ENCODE measurements at regions of chr15 and their contacts with region 1.

Region 1: GRCh38 chr15:73633111-73633990 is at the start of gene NPTN:
- DNase-seq: peak; percentile 100
- H3K4me3 Mint-ChIP-seq: peak within 1 kb of the TSS; percentile 86
- H3K27ac Mint-ChIP-seq: peak within 1 kb of the TSS; percentile 82
- H3K4me1 Mint-ChIP-seq: peaks cover 36% of the 10 kb centered on the region
- H3K27me3 Mint-ChIP-seq: peaks cover 20% of the 10 kb centered on the region
- total RNA-seq, gene NPTN: 61.6 and 68.7 TPM in 2 replicates

Region 2: DNA sequence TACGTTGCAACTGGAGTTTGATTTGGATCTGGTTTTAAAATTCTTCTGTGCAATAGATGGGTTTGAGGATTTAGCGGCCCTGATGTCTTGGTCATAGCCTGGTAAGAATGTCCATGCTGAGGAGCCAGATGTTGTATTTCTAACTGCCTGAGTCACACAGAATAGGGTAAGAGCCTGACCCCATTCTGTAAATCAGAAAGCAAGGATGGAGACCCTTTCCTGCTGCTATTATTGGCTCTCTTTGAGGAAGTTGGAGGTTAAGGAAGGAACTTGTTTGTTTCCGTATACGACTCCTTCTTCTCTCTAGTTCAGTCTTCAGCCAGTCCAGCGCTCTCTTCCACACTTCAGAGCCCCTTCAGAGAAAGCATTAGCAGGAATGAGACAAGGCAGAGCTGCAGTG is 329.7 kb before region 1 on chr15:
- intact Hi-C with region 1: loop called (anchors 2 kb)
- DNase-seq: no peak
- H3K4me3 Mint-ChIP-seq: no peak overlapping the region
- H3K27ac Mint-ChIP-seq: no peak overlapping the region
- H3K4me1 Mint-ChIP-seq: peaks cover 7% of the 10 kb centered on the region
- H3K27me3 Mint-ChIP-seq: no peaks in the 10 kb centered on the region

Region 3: DNA sequence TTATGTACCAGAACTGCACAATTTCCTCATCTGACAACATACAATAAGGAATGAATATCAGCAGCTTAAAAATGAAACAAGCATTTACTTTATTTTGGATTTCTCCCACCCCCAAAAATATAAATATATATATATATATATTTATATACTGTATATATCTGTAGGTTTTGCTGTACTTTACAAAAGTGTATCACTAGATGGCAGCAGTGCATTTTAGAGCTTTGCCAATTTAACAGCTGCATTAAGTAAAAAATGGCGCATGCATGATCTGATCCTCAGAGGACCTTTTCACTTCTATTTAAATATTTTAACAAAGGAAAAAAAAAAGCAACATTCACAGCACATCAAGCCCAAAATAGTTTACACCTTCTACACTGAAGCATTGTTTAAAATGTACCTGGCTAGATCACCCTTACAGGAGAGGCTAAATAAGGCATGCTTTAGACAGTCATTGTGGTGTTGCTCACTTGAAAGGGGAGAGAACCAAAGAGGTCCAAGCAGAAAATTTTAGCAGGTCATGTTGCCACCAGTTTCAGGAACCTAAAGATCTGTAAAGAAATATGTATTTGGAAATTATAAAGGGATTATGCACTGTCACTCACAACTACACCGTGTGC is 72.7 kb before region 1 on chr15:
- intact Hi-C with region 1: loop called (anchors 1 kb)
- DNase-seq: peak; percentile 76
- H3K4me3 Mint-ChIP-seq: no peak overlapping the region
- H3K27ac Mint-ChIP-seq: no peak overlapping the region
- H3K4me1 Mint-ChIP-seq: peaks cover 5% of the 10 kb centered on the region
- H3K27me3 Mint-ChIP-seq: no peaks in the 10 kb centered on the region

Region 4: DNA sequence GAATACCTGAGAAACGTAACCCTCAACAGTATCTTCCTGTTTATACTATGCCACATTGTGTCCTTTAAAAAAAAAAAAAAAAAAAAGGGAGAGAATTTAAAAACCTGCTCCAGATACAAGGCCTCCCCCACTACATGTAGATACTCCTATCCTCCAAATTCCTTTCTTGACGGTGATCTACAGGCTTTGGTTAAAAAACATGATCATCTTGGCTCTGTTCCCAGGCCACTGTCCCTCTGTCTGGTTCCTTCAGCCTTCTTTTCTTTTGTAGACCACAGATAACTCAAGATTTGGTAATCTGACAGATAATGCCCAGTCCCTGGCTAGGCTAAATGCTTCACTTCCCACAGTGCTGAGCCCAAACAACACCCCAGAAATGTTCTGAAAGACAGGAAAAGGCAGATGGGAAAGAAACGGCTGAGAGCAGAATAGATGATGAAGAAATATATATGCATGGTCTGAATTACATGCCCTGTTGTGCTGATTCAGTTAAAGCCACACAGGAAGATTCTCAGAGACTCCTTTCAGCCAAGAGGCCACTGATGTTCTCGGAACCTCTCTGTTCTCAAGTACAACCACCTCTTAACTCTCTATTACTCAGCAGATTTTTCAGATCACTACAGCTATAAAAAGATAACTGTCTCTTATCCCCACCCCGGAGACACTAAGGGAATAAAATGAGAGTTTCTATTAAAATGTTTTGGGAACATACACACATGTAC is 48.5 kb before region 1 on chr15:
- intact Hi-C with region 1: loop called (anchors 5 kb)
- DNase-seq: no peak
- H3K4me3 Mint-ChIP-seq: peak overlapping the region; percentile 5
- H3K27ac Mint-ChIP-seq: no peak overlapping the region
- H3K4me1 Mint-ChIP-seq: peaks cover 39% of the 10 kb centered on the region
- H3K27me3 Mint-ChIP-seq: no peaks in the 10 kb centered on the region

Region 5: GRCh38 chr15:73683777-73684580 is 50.6 kb after region 1 on chr15 and contains the start of gene CD276:
- intact Hi-C with region 1: loop called (anchors 5 kb)
- DNase-seq: no peak
- H3K4me3 Mint-ChIP-seq: peak within 1 kb of the TSS; percentile 84
- H3K27ac Mint-ChIP-seq: peak within 1 kb of the TSS; percentile 82
- H3K4me1 Mint-ChIP-seq: peaks cover 24% of the 10 kb centered on the region
- H3K27me3 Mint-ChIP-seq: peaks cover 53% of the 10 kb centered on the region
- total RNA-seq, gene CD276: 20.1 and 20.3 TPM in 2 replicates

Region 6: DNA sequence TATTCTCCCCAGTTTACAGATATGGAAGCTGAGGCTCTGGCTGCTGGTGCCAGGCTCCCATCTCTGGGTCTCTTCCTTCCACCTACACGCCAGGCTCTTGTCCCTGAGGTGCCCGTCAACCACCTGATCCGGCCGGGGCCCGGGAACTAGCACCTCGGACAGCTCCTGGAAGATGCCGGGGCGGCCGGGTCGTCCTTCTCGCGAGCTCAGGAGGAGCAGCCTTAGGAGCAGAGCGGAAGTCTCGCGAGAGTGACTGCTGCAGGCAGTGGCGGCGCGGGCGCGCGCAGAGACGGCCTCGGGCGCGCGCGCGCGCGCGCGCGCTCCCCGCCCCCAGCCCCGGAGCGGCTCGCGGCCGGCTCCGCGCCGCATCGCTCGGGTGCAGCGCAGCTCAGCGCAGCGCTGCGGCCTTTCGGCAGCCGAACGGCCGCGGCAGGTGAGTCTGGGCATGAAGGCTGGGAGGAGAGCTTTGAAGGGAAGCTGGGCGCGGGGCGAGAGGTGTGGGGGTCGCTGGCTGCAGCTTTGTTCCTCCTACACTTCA is 1362.0 kb after region 1 on chr15 and contains the start of gene SCAMP5:
- intact Hi-C with region 1: loop called (anchors 5 kb)
- DNase-seq: peak; percentile 99
- H3K4me3 Mint-ChIP-seq: peak within 1 kb of the TSS; percentile 61
- H3K27ac Mint-ChIP-seq: peak within 1 kb of the TSS; percentile 16
- H3K4me1 Mint-ChIP-seq: peaks cover 13% of the 10 kb centered on the region
- H3K27me3 Mint-ChIP-seq: peaks cover 41% of the 10 kb centered on the region
- total RNA-seq, gene SCAMP5: 0.92 and 1.3 TPM in 2 replicates

Measured in activated CD4-positive, alpha-beta T cell treated with anti-CD3 and anti-CD28 coated beads, Interleukin-2, amount 10 ng/mL, durations not matched to agents 24 days and 14 days (primary cell).